CD4-positive, alpha-beta T cell (primary cell): ENCODE measurements at regions of chr20 and their contacts with region 1.

Region 1: GRCh38 chr20:32599783-32600340 is 14.7 kb upstream of the NOL4L start:
- DNase-seq: no peak
- ATAC-seq: no peak
- H3K4me3 ChIP-seq: no peak overlapping the region
- H3K4me3 Mint-ChIP-seq: no peak overlapping the region
- H3K27ac ChIP-seq: no peak overlapping the region
- H3K27ac Mint-ChIP-seq: no peak overlapping the region
- H3K4me1 ChIP-seq: peaks cover 6% of the 10 kb centered on the region
- H3K4me1 Mint-ChIP-seq: peaks cover 4% of the 10 kb centered on the region
- H3K27me3 ChIP-seq: no peaks in the 10 kb centered on the region
- H3K27me3 Mint-ChIP-seq: no peaks in the 10 kb centered on the region
- CTCF ChIP-seq: no peak

Region 2: DNA sequence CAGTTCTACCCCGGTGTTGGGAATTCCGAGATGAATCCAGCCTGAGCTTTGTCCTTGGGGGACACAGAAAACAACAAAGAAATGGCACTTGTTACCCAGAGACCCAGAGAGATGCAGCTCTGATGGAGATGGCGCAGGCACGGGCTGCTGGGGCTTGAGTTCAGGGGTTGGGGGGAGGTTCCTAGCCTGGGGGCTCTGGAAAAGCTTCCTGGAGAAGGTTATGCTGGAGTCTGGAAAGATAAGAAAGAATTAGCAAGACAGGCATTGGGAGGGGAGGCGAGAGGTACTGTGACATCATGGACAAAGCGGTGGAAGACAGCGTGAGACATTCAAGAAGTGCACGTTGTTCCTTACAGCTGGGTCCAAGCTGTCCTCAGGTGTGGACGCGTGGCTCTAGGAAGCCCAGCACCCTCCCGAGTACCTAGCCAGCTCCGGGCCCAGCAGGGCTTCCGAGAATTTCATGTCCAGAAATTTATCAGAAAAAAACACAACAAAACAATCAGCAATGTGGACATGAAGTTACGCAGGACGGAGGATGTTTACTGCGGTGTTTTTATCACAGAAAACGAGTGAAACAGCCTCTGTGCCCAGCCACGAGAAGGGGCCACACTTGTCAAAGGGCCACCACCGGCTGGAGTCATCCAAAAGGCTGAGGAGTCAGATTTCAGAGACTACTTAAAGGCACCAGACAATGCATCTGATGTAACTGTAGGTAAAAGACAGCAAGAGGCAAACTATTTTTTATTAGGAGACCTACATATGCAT is 34.4 kb after region 1 on chr20:
- CTCF ChIA-PET with region 1: no interaction called
- POLR2A ChIA-PET with region 1: no interaction called
- intact Hi-C with region 1: loop called in 1 of 2 experiments (anchors 5 kb)
- DNase-seq: no peak
- ATAC-seq: no peak
- H3K4me3 ChIP-seq: no peak overlapping the region
- H3K4me3 Mint-ChIP-seq: no peak overlapping the region
- H3K27ac ChIP-seq: no peak overlapping the region
- H3K27ac Mint-ChIP-seq: no peak overlapping the region
- H3K4me1 ChIP-seq: no peaks in the 10 kb centered on the region
- H3K4me1 Mint-ChIP-seq: no peaks in the 10 kb centered on the region
- H3K27me3 ChIP-seq: peaks cover 0 to 4% of the 10 kb centered on the region in 2 experiments
- H3K27me3 Mint-ChIP-seq: no peaks in the 10 kb centered on the region
- CTCF ChIP-seq: no peak